PC-3 (cell line): ENCODE measurements at regions of chr7 and their contacts with region 1.

Region 1: GRCh38 chr7:43260980-43261878 is 148.8 kb downstream of the HECW1 start:
- DNase-seq: peak; percentile 88
- ATAC-seq: peak; percentile 99
- H3K4me3 ChIP-seq: no peak overlapping the region
- H3K27ac ChIP-seq: no peak overlapping the region
- H3K4me1 ChIP-seq: no peaks in the 10 kb centered on the region
- H3K27me3 ChIP-seq: no peaks in the 10 kb centered on the region
- CTCF ChIP-seq: peak; percentile 97

Region 2: DNA sequence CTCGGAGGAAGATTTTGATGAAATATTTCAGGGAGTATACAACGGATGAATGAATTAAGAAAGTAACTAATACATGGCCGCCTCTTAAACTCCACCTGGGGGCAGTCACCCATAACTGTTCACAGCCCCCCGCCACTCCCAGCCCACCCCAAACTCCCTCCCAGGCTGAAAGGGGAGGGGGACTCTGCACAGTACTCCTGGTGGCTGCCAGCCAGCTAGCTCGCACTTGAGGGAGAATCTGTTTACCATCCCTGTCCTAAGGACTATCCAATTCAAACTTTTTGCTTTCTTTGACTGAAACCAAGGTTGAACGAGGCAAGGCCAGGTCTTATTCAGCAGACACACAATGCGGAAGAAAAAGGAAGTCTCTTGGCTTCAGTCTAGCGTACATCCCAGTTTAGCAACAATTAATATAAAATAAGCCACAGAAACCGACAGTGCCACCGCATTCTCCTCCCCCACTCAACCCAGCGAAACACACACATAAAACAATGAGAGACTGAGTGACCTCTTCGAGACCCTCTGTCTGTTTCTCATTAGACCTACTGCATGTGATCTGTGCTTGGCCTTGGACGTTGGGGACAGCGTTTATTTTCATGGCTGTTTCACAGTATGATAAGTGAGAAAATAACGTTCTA is 1243.8 kb before region 1 on chr7:
- CTCF ChIA-PET with region 1: no interaction called
- POLR2A ChIA-PET with region 1: no interaction called
- intact Hi-C with region 1: no loop called
- DNase-seq: no peak
- ATAC-seq: no peak
- H3K4me3 ChIP-seq: no peak overlapping the region
- H3K27ac ChIP-seq: no peak overlapping the region
- H3K4me1 ChIP-seq: peaks cover 11% of the 10 kb centered on the region
- H3K27me3 ChIP-seq: no peaks in the 10 kb centered on the region
- CTCF ChIP-seq: no peak

Region 3: DNA sequence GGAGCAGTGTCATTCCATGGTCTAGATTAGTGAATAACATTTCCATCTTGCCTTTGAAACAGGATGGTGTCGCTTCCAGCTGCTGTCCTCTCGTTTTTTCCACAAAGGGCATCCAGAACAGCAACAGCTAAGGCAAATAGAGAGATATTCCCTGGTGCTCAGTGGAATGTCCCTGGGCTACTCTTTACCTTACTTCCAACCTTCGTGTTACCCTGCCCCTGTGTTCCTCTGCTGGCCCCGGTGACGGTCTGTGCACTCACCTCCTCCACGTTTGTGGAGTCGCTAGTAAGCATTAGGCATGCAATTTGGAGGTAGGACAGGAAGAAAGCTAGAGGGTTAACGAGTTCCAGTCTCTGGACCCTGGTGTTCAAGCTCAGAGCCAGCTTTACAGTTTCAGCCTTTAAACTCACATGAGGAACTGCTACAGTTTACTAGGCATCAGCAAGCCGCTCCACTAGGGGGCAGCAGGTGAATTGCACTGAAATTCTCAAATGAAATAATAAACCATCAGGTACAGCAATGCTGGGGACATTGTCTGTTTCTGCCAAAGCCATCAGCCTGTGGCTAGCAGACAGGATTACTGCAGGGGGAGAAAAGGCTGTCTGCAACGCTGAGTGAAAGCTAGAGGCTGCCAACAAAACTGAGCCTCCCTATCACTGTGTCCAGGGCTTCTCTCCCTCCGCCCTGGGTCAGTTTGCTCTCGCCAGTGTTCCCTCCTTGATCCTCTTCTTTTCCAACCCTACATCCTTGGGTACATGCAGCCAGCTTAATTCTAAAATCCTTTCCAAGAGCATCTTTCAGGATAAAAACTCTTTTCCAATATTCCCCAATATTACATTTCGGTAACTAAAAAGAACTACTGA is 320.0 kb before region 1 on chr7:
- CTCF ChIA-PET with region 1: interaction called, 11 read pairs
- POLR2A ChIA-PET with region 1: no interaction called
- intact Hi-C with region 1: loop called (anchors 1 kb)
- DNase-seq: peak; percentile 79
- ATAC-seq: peak; percentile 90
- H3K4me3 ChIP-seq: no peak overlapping the region
- H3K27ac ChIP-seq: no peak overlapping the region
- H3K4me1 ChIP-seq: no peaks in the 10 kb centered on the region
- H3K27me3 ChIP-seq: no peaks in the 10 kb centered on the region
- CTCF ChIP-seq: peak; percentile 93

Region 4: GRCh38 chr7:43108255-43109011 is 152.8 kb before region 1 on chr7:
- CTCF ChIA-PET with region 1: no interaction called
- POLR2A ChIA-PET with region 1: no interaction called
- intact Hi-C with region 1: loop called (anchors 2 kb)
- DNase-seq: peak; percentile 79
- ATAC-seq: peak; percentile 87
- H3K4me3 ChIP-seq: no peak overlapping the region
- H3K27ac ChIP-seq: no peak overlapping the region
- H3K4me1 ChIP-seq: no peaks in the 10 kb centered on the region
- H3K27me3 ChIP-seq: peaks cover 27% of the 10 kb centered on the region
- CTCF ChIP-seq: peak; percentile 90

Region 5: GRCh38 chr7:43175570-43176200 is 85.5 kb before region 1 on chr7:
- CTCF ChIA-PET with region 1: no interaction called
- POLR2A ChIA-PET with region 1: no interaction called
- intact Hi-C with region 1: loop called (anchors 1 kb)
- DNase-seq: no peak
- ATAC-seq: no peak
- H3K4me3 ChIP-seq: no peak overlapping the region
- H3K27ac ChIP-seq: no peak overlapping the region
- H3K4me1 ChIP-seq: no peaks in the 10 kb centered on the region
- H3K27me3 ChIP-seq: no peaks in the 10 kb centered on the region
- CTCF ChIP-seq: no peak

Region 6: DNA sequence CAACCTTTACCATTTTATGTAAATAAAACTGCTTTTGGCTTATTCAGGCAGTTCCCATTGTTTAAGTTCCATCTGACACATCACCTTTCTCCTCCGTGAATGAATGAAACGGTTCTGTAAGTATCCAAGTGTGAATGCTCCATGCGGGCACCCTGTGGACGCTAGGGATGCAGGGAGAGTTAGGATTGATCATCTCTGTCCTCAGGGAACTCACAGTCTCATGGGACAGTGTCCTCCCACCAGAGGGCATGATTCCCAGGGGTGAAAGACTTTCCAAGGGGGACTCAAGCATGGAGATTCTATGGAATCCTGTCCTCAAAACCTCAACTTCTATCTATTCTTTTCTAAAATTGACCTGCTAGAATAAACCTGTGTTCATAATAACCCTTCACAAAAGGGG is 50.0 kb before region 1 on chr7:
- CTCF ChIA-PET with region 1: no interaction called
- POLR2A ChIA-PET with region 1: no interaction called
- intact Hi-C with region 1: loop called (anchors 5 kb)
- DNase-seq: peak; percentile 14
- ATAC-seq: no peak
- H3K4me3 ChIP-seq: no peak overlapping the region
- H3K27ac ChIP-seq: no peak overlapping the region
- H3K4me1 ChIP-seq: no peaks in the 10 kb centered on the region
- H3K27me3 ChIP-seq: no peaks in the 10 kb centered on the region
- CTCF ChIP-seq: peak; percentile 48

Region 7: GRCh38 chr7:43281268-43281667 is 20.0 kb after region 1 on chr7:
- CTCF ChIA-PET with region 1: no interaction called
- POLR2A ChIA-PET with region 1: interaction called, 22 read pairs
- intact Hi-C with region 1: no loop called
- DNase-seq: no peak
- ATAC-seq: no peak
- H3K4me3 ChIP-seq: no peak overlapping the region
- H3K27ac ChIP-seq: no peak overlapping the region
- H3K4me1 ChIP-seq: no peaks in the 10 kb centered on the region
- H3K27me3 ChIP-seq: no peaks in the 10 kb centered on the region
- CTCF ChIP-seq: no peak

Region 8: DNA sequence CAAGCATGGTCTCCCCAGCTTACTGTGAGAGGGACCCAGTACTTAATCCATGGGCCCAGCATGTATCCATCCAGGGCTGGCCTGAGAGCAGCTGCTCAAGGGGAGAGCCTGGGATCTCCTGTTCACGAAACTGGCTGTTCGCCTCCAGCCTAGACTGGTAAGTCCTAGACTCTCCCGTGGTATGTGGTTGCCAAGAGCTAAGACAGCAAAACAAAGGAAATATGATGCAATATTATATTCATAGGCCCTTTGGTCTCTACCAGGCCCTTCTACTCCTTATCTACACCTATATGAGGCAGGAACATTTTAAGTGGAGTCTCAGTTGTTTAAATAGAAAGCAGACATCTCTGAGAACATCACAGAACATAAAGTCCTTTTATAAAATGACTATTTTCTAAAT is 292.8 kb after region 1 on chr7:
- CTCF ChIA-PET with region 1: no interaction called
- POLR2A ChIA-PET with region 1: no interaction called
- intact Hi-C with region 1: no loop called
- DNase-seq: no peak
- ATAC-seq: no peak; the same call in 1 of the 2 replicates
- H3K4me3 ChIP-seq: no peak overlapping the region
- H3K27ac ChIP-seq: no peak overlapping the region
- H3K4me1 ChIP-seq: peaks cover 9% of the 10 kb centered on the region
- H3K27me3 ChIP-seq: no peaks in the 10 kb centered on the region
- CTCF ChIP-seq: no peak